Adrenal gland (tissue), 19 donors: ENCODE measurements at regions of chr10 and their contacts with region 1.

Region 1: DNA sequence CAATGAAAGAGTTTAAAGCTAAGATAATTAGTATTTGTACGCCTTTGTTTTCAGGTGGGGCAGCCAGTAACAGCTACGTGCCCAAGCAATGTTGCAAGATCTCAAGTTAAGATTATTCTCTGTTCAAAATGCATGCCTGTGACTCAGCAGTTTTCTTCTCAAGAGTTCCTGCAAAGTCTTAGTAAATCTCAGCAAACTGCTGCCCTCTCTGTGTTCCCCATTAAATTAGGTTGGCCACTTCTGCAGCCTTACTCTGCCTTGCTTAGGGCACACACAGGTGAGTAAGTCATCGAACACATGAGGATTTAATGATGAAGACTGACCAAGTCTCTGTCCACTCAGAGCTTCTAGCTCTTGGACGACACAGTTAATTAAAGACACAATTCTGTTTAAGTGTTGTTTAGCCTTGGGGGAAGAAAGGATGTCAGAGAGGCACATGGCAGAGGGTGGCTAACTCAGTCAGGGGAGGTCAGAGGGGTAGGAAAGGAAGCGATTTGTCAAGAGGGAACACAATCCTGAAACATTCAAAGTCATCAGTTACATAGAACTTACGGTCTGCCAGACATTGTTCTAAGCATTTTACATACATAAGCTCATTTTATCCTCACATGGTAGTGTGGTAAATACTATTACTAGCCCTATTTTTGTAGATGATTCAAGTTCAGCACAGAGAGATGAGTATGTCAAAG is 20.2 kb upstream of the SLC35G1 start:
- DNase-seq: peak in 1 of 7 donors; percentile 4
- H3K4me3 ChIP-seq: no peak overlapping the region
- H3K27ac ChIP-seq: no peak overlapping the region
- H3K4me1 ChIP-seq: peaks cover 0 to 13% of the 10 kb centered on the region in 2 donors
- H3K27me3 ChIP-seq: no peaks in the 10 kb centered on the region
- CTCF ChIP-seq: no peak
- POLR2A ChIP-seq: no peak

Region 2: GRCh38 chr10:93672022-93672678 is 201.4 kb before region 1 on chr10:
- intact Hi-C with region 1: no loop called
- DNase-seq: no peak
- H3K4me3 ChIP-seq: no peak overlapping the region
- H3K27ac ChIP-seq: no peak overlapping the region
- H3K4me1 ChIP-seq: peaks cover 4 to 7% of the 10 kb centered on the region in 2 donors
- H3K27me3 ChIP-seq: no peaks in the 10 kb centered on the region
- CTCF ChIP-seq: no peak
- POLR2A ChIP-seq: no peak

Region 3: DNA sequence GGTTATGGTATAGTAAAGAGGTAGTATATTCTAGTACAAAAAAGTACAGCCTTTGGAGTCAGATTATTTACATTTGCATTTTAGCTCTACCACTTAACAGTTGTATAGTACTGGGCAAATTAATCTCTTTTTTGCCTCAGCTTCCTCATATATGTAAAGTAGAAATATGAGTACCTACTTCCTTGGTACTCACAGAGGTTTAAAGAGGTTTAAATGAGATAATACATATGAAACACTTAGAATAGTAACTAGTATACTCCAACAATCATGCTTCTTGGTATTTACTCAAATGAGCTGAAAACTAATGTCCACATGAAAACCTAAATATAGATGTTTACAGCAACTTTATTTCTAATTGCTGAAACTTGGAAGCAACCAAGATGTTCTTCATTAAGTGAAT is 185.8 kb before region 1 on chr10:
- intact Hi-C with region 1: no loop called
- DNase-seq: no peak
- H3K4me3 ChIP-seq: no peak overlapping the region
- H3K27ac ChIP-seq: no peak overlapping the region
- H3K4me1 ChIP-seq: no peaks in the 10 kb centered on the region
- H3K27me3 ChIP-seq: no peaks in the 10 kb centered on the region
- CTCF ChIP-seq: no peak
- POLR2A ChIP-seq: no peak

Region 4: DNA sequence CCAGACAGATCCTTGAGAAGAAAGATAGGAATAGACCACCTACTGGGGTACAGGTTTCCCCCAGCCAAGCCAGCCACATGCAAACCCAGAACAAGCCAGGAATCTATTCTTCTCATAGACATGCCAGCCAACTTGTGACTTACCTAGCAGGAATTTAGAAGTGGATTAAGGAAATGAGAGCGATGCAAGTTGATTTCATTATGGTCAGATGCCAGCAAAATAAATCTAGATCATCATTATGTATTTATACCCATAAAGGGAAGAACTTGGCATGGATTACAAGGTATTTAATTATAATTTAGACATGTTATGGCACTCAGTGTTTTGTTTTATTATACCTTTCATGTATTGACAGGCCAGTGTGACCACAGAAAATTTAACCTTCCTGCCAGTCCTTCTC is 53.0 kb after region 1 on chr10:
- intact Hi-C with region 1: no loop called
- DNase-seq: no peak
- H3K4me3 ChIP-seq: no peak overlapping the region
- H3K27ac ChIP-seq: no peak overlapping the region
- H3K4me1 ChIP-seq: no peaks in the 10 kb centered on the region
- H3K27me3 ChIP-seq: no peaks in the 10 kb centered on the region
- CTCF ChIP-seq: no peak
- POLR2A ChIP-seq: no peak

Region 5: DNA sequence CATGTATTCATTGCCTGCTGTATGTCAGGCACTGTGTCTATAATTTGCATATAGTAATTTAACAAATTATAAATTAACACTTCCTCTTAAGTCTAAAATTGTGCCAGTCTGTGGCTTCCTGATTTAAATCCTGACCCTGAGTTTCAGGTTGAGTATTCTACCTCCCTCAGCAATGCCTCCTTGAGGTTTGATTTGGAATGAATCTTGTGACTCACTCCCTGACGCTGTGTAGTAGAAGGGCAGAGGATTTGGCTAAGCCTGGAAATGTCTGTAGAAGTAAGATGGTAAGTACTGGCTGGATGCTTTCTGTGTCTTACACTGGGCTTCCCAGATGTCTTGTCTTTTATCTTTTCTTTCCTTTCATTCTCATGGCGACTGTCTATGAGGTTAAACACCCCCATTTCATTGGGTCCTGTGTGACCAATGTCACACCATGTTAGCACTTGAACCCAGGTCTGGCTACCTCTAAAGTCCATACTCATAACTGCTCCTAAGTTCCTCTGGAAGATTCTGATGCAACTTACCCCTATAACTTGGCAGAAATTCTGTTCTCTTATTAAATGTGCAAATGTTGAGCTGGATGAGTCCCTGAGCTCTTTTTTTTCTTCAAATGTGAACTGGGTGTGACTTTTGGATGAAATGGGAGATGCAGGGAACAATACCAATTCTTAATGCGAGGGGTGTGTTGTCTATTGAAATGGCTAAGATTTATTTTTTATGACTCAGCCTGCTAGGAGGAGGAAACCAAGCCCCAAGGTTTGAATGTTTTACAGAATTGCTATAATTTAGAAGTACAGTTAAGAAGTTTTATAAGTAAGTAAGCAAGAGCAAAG is 168.6 kb after region 1 on chr10:
- intact Hi-C with region 1: loop called in 1 of 2 experiments (anchors 5 kb)
- DNase-seq: peak in 1 of 7 donors; percentile 3
- H3K4me3 ChIP-seq: no peak overlapping the region
- H3K27ac ChIP-seq: no peak overlapping the region
- H3K4me1 ChIP-seq: no peaks in the 10 kb centered on the region
- H3K27me3 ChIP-seq: no peaks in the 10 kb centered on the region
- CTCF ChIP-seq: peak in 2 of 6 experiments; percentile 9 to 17
- POLR2A ChIP-seq: no peak